ENCODE measurements at regions of chr5 and their contacts with region 1.

Region 1: DNA sequence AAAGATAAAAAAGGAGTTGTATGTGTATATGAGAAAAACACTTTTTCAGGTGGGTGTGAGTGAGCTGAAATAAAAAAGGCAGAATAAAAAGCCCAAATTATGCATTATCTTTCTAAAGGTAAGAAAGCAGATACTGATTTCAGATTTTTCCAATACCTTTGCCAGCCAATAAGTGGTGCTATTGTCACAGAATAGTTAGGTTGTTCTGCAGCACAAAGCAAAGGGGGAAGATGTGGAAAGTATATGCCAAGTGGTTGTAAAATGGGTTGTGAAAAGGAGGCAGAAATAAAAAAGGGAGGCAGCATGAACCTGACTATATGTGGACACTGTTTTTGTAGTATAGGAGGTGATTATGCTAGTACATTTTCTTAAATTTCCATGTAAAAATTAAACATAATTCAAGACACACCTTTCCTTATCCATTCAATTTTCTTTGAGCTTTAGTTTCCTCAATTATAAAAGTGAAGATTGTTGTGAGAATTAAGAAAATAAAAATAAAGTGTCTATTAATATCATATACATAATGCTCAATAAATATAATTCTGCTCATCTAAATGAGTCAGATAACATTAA is 106.7 kb downstream of the SMIM15 start:
- DNase-seq: no peak
- H3K4me3 ChIP-seq: no peak overlapping the region
- H3K27ac ChIP-seq: no peak overlapping the region
- H3K4me1 ChIP-seq: peaks cover 0 to 2% (median 1%) of the 10 kb centered on the region in 4 experiments; a peak in 2 of 7 replicates
- H3K27me3 ChIP-seq: peaks cover 0 to 1% (median 0%) of the 10 kb centered on the region in 4 experiments; a peak in 1 of 7 replicates
- CTCF ChIP-seq: peak in 2 of 3 experiments; percentile 64 to 78; a peak in 3 of 4 replicates
- EP300 ChIP-seq: no peak
- POLR2A ChIP-seq: no peak
- RAD21 ChIP-seq: peak; percentile 89 to 90

Region 2: GRCh38 chr5:61139100-61139873 is 83.8 kb after region 1 on chr5:
- CTCF ChIA-PET with region 1: interaction called, 14 read pairs
- POLR2A ChIA-PET with region 1: no interaction called
- DNase-seq: no peak
- H3K4me3 ChIP-seq: no peak overlapping the region
- H3K27ac ChIP-seq: no peak overlapping the region
- H3K4me1 ChIP-seq: no peaks in the 10 kb centered on the region; a peak in 1 of 7 replicates
- H3K27me3 ChIP-seq: no peaks in the 10 kb centered on the region
- CTCF ChIP-seq: peak in 1 of 3 experiments; percentile 42; a peak in 1 of 4 replicates
- EP300 ChIP-seq: no peak
- POLR2A ChIP-seq: no peak
- RAD21 ChIP-seq: peak; percentile 11 to 29; a peak in 2 of 4 replicates

Measured in H1 (cell line).